GM10248 (cell line): ENCODE measurements at regions of chr1 and their contacts with region 1.

Region 1: GRCh38 chr1:1847061-1847850 is 43.6 kb downstream of the GNB1 start:
- DNase-seq: no peak
- CTCF ChIP-seq: no peak

Region 2: GRCh38 chr1:1861339-1861730 is 14.1 kb after region 1 on chr1:
- CTCF ChIA-PET with region 1: interaction called, 13 read pairs
- POLR2A ChIA-PET with region 1: no interaction called
- DNase-seq: peak; percentile 10
- CTCF ChIP-seq: no peak